ENCODE measurements at regions of chr17 and their contacts with region 1.

Region 1: DNA sequence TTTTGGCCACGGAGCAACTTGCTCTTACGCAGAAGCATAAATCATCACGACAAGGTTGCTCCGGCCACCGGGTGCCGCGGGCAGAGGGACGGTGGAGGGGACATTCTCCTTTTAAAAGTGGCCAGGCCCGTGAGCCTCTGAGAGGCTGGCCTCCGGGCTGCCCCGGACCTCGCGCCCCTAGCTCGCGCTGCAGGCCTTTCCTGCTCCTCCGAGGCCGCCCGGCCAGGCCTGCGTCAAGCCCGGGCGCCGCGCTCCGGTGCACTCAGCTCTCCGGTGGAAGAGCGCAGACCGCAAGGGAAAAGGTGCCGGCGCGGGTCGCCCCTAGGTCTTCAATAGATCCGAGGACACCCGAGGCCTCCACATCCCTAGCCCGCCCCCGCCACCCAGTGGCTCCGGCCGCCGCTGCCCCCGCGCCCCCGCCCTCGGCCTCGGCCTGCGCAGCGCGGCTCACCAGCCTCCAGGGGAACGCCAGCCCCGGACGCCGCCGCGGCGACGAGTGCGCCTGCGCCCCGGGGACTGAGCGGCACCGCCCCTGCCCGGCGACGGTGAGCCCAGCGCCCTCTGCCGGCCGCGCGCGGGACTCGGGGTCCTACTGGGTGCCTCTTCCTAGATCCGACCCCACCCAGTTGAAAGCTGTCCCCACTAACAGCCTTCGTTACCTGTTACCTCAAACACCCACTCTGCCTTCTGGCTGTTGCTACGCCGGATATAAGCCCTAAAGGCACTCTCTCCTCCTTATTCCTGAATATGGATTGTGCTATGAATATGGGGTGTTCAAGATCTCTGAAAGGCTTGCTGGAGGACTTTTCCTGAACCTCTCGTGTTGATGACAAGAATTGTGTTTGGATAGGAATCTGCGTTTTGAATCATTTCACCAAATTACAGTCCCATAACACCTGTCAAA is at the start of gene LYRM9:
- DNase-seq: peak; percentile 93 to 98 (median 96)
- ATAC-seq: peak; percentile 99
- H3K4me3 ChIP-seq: peak within 1 kb of the TSS; percentile 47
- H3K27ac ChIP-seq: peak within 1 kb of the TSS; percentile 71
- H3K4me1 ChIP-seq: peaks cover 10 to 35% of the 10 kb centered on the region in 2 experiments
- H3K27me3 ChIP-seq: no peaks in the 10 kb centered on the region
- CTCF ChIP-seq: peak; percentile 84 to 86 (median 84)
- EP300 ChIP-seq: no peak
- POLR2A ChIP-seq: peak; percentile 52; the same call in 1 of the 2 replicates
- RAD21 ChIP-seq: peak; percentile 63 to 65
- polyA plus RNA-seq, gene LYRM9: 1.0 to 1.8 TPM

Region 2: GRCh38 chr17:27985306-27985705 is 92.2 kb after region 1 on chr17:
- CTCF ChIA-PET with region 1: no interaction called
- POLR2A ChIA-PET with region 1: no interaction called
- in situ Hi-C with region 1: no loop called
- intact Hi-C with region 1: loop called (anchors 5 kb)
- DNase-seq: peak in 1 of 4 experiments; percentile 55
- ATAC-seq: peak; percentile 55
- H3K4me3 ChIP-seq: no peak overlapping the region
- H3K27ac ChIP-seq: peak overlapping the region; percentile 89
- H3K4me1 ChIP-seq: peaks cover 45 to 60% of the 10 kb centered on the region in 2 experiments
- H3K27me3 ChIP-seq: no peaks in the 10 kb centered on the region
- CTCF ChIP-seq: no peak
- EP300 ChIP-seq: no peak
- POLR2A ChIP-seq: no peak
- RAD21 ChIP-seq: no peak

Region 3: GRCh38 chr17:28133562-28133970 is 240.4 kb after region 1 on chr17:
- CTCF ChIA-PET with region 1: no interaction called
- POLR2A ChIA-PET with region 1: no interaction called
- in situ Hi-C with region 1: no loop called
- intact Hi-C with region 1: loop called (anchors 5 kb)
- DNase-seq: no peak
- ATAC-seq: no peak
- H3K4me3 ChIP-seq: no peak overlapping the region
- H3K27ac ChIP-seq: no peak overlapping the region
- H3K4me1 ChIP-seq: no peaks in the 10 kb centered on the region
- H3K27me3 ChIP-seq: no peaks in the 10 kb centered on the region
- CTCF ChIP-seq: no peak
- EP300 ChIP-seq: no peak
- POLR2A ChIP-seq: no peak
- RAD21 ChIP-seq: no peak